ENCODE measurements at regions of chr6 and their contacts with region 1.

Region 1: GRCh38 chr6:159042003-159042825 is 2.6 kb downstream of the TAGAP start:
- DNase-seq: peak in 9 of 10 donors; percentile 35 to 88 (median 60)

Region 2: GRCh38 chr6:159104163-159104925 is 62.1 kb after region 1 on chr6:
- intact Hi-C with region 1: loop called (anchors 1 kb)
- DNase-seq: peak; percentile 33 to 93 (median 62)

Region 3: DNA sequence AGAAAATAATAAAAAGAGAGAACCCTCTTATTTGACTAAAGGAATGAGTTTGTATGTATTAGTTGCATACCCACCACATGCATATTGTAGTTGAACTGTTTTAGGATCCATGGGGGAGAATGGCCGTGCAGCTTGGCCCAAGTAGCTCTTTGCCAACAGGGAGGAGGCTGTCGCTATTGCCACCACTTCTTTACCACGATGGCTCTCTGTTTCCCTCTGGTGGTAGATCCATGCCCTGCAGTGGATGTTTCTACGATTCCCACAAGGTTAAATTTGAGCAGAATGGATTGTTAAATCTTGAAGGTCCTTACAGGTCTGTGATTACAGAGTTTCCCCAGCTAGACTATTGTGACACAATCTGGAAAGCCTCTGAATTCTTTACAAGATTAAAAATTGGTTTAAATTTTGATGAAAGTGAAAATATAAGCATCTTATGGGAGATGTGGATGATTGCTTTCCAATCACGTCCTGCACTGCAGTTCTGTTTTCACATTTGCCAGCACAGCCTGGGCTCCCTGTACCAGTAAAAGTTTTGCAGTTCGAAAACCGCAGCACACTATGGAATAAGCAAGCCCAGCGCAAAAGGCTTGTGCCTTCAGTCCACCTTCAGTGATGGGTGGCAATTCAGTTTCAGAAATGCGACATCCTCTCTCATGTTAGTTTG is 92.6 kb after region 1 on chr6:
- intact Hi-C with region 1: loop called (anchors 1 kb)
- DNase-seq: peak in 7 of 10 donors; percentile 49 to 89 (median 76)

Measured in posterior cingulate gyrus (tissue), 11 donors.